ENCODE measurements at regions of chr16 and their contacts with region 1.

Region 1: DNA sequence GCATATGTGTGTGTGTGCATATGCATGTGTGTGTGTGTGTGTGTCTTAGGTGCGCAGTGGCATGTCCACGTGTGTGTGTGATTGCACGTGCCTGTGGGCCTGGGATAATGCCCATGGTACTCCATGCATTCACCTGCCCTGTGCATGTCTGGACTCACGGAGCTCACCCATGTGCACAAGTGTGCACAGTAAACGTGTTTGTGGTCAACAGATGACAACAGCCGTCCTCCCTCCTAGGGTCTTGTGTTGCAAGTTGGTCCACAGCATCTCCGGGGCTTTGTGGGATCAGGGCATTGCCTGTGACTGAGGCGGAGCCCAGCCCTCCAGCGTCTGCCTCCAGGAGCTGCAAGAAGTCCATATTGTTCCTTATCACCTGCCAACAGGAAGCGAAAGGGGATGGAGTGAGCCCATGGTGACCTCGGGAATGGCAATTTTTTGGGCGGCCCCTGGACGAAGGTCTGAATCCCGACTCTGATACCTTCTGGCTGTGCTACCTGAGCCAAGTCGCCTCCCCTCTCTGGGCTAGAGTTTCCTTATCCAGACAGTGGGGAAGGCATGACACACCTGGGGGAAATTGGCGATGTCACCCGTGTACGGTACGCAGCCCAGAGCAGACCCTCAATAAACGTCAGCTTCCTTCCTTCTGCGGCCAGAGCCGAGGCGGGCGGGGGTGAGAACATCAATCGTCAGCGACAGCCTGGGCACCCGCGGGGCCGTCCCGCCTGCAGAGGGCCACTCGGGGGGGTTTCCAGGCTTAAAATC is 47.6 kb downstream of the IL21R start:
- DNase-seq: no peak
- H3K4me3 ChIP-seq: no peak overlapping the region
- H3K27ac ChIP-seq: no peak overlapping the region
- H3K4me1 ChIP-seq: no peaks in the 10 kb centered on the region
- H3K27me3 ChIP-seq: no peaks in the 10 kb centered on the region
- CTCF ChIP-seq: no peak

Region 2: GRCh38 chr16:27138266-27138665 is 311.3 kb before region 1 on chr16:
- intact Hi-C with region 1: no loop called
- DNase-seq: no peak
- H3K4me3 ChIP-seq: no peak overlapping the region
- H3K27ac ChIP-seq: no peak overlapping the region
- H3K4me1 ChIP-seq: no peaks in the 10 kb centered on the region
- H3K27me3 ChIP-seq: no peaks in the 10 kb centered on the region
- CTCF ChIP-seq: no peak

Region 3: DNA sequence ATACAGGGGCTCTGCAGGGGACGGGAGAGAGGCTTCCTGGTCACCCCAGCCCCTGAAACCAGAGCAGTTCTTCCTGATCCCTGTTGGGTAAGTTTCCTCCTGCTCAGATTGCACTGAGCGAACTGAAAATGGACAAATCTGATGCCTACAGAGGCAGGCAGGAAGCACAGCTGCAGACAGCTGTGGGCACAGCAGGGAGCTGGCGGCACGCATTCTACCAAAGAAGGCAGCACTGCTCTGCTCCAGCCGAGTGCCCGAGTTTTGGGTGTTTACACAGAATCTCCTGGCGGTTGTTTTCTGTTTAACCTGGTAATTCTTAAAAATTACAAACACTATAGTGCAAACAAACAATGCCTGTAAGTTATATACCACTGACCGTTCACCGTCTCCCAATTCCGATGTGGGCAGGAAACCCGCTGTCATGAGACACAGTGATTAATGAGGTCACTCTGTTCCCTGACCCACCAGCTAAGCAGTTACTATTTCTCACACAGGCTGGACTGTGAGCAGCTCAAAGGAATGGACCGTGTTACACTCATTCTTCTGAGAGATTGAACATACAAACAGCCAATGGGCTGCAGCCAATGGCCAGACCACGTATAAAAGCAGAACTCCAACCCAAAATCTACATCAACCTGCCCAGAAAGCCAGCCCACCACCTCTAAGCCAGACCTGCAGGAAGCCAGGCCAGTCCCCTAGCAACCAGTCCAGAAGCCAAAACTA is 206.6 kb before region 1 on chr16:
- intact Hi-C with region 1: loop called (anchors 10 kb)
- DNase-seq: no peak
- H3K4me3 ChIP-seq: no peak overlapping the region
- H3K27ac ChIP-seq: peak overlapping the region; percentile 68
- H3K4me1 ChIP-seq: peaks cover 27% of the 10 kb centered on the region
- H3K27me3 ChIP-seq: no peaks in the 10 kb centered on the region
- CTCF ChIP-seq: no peak

Region 4: DNA sequence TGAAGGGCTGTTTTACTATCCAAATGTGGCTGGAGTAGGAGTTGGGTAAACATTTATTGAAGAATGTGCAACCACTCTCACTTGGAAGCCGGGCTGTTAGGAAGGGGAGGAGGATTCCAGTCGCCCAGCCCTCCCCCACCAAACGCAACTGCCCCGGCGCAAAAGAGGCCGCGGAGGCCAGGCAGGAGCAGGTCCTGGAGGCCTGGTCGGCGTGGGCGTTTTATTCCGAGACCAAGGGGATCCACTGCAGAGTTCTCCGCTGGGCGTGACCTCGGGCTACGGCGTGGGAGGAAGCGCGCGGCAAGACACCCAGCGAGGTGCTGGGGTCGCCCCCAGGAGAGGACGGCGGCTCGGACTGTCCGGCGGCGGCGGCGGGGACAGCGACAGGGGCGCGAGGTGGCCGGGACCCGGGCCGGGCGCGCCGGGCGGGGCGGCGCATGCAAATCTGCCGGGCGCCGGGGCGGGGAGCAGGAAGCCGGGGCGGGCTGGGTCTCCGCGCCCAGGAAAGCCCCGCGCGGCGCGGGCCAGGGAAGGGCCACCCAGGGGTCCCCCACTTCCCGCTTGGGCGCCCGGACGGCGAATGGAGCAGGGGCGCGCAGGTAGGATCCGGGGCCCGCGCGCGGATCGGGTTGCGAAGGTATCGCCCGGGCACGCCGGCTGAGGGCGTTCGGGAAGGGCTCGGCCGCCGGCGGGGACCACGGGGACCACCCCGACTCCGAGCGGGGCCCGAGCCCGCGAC is 136.0 kb before region 1 on chr16 and contains the start of gene IL4R:
- intact Hi-C with region 1: no loop called
- DNase-seq: peak; percentile 80
- H3K4me3 ChIP-seq: peak within 1 kb of the TSS; percentile 91
- H3K27ac ChIP-seq: peak within 1 kb of the TSS; percentile 99
- H3K4me1 ChIP-seq: peaks cover 9% of the 10 kb centered on the region
- H3K27me3 ChIP-seq: no peaks in the 10 kb centered on the region
- CTCF ChIP-seq: no peak
- total RNA-seq, gene IL4R: 74.8 to 80.0 TPM

Region 5: DNA sequence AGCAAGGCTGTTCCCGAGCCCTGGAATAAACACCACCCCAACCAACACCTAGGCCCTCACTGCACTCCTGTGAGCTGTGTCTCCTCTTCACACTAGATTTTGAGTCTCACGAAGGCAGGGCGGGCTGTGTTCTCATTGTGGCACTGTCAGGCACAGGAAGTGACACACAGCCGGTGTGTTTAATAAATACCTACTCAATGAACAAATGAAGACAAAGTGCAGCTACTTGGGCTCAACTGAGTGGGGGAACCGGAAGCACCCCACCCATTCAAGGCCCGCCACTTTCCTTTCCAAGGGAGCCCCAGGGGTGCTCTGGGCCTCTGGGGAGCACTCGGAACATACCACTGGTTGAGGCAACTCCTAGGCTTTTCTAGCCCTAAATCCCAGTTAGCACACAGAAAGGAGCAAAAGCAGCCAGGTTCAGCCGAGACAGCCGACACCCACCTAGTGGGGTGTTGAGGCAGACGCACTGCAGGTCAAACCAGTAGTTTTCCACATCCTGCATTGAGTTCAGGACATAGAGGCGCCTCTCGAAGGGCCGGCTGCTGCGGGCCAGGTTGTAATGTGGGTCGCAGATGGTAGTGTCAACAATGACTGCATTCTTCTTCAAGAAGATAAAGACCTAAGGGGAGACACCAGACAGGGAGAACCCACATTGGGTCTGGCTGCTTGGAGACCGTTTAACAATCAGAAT is 42.4 kb after region 1 on chr16:
- intact Hi-C with region 1: no loop called
- DNase-seq: no peak
- H3K4me3 ChIP-seq: no peak overlapping the region
- H3K27ac ChIP-seq: no peak overlapping the region
- H3K4me1 ChIP-seq: no peaks in the 10 kb centered on the region
- H3K27me3 ChIP-seq: no peaks in the 10 kb centered on the region
- CTCF ChIP-seq: no peak

Region 6: DNA sequence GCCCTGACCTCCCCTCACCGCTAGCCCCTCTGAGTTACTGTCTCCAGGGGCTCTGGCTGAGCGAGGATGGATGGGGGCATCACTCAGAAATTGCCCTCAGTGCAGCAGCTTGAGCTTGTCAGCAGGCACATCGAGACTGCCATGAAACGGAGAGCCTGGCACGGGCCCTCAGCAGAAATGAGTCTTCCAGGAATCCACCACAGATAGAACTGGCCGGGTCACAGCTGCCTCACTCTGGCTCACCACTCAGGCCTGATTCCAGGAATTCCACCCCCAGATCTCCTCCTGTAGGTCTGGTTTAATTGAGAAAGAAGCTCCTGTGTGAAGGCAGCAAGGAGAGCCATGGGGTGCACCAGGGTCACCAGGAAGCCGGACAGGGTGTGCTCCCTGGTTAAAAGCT is 528.4 kb after region 1 on chr16:
- intact Hi-C with region 1: no loop called
- DNase-seq: no peak
- H3K4me3 ChIP-seq: no peak overlapping the region
- H3K27ac ChIP-seq: no peak overlapping the region
- H3K4me1 ChIP-seq: no peaks in the 10 kb centered on the region
- H3K27me3 ChIP-seq: no peaks in the 10 kb centered on the region
- CTCF ChIP-seq: no peak

Measured in colonic mucosa (tissue), 4 donors.